ENCODE measurements at regions of chr19 and their contacts with region 1.

Region 1: DNA sequence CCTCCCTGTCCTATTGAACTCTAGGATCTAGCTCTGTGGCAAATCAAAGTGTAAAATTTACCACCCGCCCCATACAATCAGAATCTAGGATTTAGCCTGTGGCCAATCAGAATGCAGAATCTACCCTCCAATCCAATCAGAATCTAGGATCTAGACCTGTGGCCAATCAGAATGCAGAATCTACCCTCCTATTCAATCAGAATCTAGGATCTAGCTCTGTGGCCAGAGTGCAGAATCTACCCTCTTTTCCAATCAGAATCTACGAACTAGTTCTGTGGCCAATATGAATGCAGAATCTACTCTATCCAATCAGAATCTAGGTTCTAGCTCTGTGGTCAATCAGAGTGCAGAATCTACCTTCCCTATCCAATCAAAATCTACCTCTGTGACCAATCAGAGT is 25.8 kb downstream of the PRKD2 start:
- DNase-seq: no peak
- H3K4me3 ChIP-seq: no peak overlapping the region
- H3K27me3 ChIP-seq: no peaks in the 10 kb centered on the region
- CTCF ChIP-seq: no peak

Region 2: GRCh38 chr19:46704379-46705076 is 13.4 kb after region 1 on chr19:
- CTCF ChIA-PET with region 1: interaction called, 13 read pairs
- POLR2A ChIA-PET with region 1: no interaction called
- DNase-seq: no peak
- H3K4me3 ChIP-seq: no peak overlapping the region
- H3K27me3 ChIP-seq: no peaks in the 10 kb centered on the region
- CTCF ChIP-seq: peak; percentile 93